Activated T-helper 1 cell treated with anti-CD3 and anti-CD28 coated beads, Interleukin-12 subunit alpha, Interleukin-12 subunit beta, Interleukin-2, Interleukin-4 antibody, amounts not matched to agents 30 ng/mL and 10 ng/mL and 1 ng/mL, durations not matched to agents 14 hours and 24 hours and 36 hours (primary cell): ENCODE measurements at regions of chr18 and their contacts with region 1.

Region 1: GRCh38 chr18:47756364-47757016 is 174.0 kb downstream of the SMAD2 start:
- DNase-seq: peak; percentile 31
- H3K4me3 Mint-ChIP-seq: no peak overlapping the region
- H3K27ac Mint-ChIP-seq: no peak overlapping the region
- H3K4me1 Mint-ChIP-seq: peaks cover 6% of the 10 kb centered on the region
- H3K27me3 Mint-ChIP-seq: peaks cover 10% of the 10 kb centered on the region

Region 2: DNA sequence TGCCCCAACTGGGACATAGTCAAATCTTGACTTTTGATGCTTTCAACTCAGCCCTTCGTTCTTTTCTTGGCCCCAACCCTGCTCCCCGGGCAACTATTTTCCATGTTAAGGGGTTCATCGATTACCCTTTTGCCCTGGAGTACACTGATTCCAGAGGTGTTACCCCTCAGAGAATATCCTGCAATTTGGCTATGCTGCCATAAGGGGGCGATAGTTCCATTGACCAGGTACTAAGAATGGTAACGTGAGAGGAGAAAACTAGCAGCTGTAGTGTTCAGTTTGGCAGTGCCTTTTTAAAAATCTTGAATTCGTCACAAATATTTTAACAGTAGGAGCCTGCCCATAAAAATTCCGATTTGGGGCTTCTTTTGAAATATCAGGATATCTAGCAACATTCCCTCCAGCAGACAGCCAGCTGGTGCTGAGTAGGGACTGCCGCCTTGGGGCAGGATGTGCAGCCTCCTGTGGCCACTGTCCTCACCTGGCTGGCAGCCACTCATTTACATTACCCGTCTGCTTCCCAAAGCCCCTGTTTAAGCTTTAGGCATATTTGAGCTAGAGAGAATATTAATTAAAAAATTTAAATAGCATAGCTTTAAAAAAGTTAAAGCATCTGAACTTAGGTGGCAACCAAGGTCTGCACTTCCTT is 358.7 kb before region 1 on chr18:
- intact Hi-C with region 1: loop called (anchors 10 kb)
- DNase-seq: no peak
- H3K4me3 Mint-ChIP-seq: no peak overlapping the region
- H3K27ac Mint-ChIP-seq: no peak overlapping the region
- H3K4me1 Mint-ChIP-seq: no peaks in the 10 kb centered on the region
- H3K27me3 Mint-ChIP-seq: no peaks in the 10 kb centered on the region

Region 3: GRCh38 chr18:48011926-48012465 is 255.5 kb after region 1 on chr18:
- intact Hi-C with region 1: no loop called
- DNase-seq: no peak
- H3K4me3 Mint-ChIP-seq: no peak overlapping the region
- H3K27ac Mint-ChIP-seq: no peak overlapping the region
- H3K4me1 Mint-ChIP-seq: no peaks in the 10 kb centered on the region
- H3K27me3 Mint-ChIP-seq: peaks cover 32% of the 10 kb centered on the region

Region 4: GRCh38 chr18:48022531-48023329 is 266.2 kb after region 1 on chr18:
- intact Hi-C with region 1: loop called (anchors 5 kb)
- DNase-seq: no peak
- H3K4me3 Mint-ChIP-seq: no peak overlapping the region
- H3K27ac Mint-ChIP-seq: no peak overlapping the region
- H3K4me1 Mint-ChIP-seq: peaks cover 12% of the 10 kb centered on the region
- H3K27me3 Mint-ChIP-seq: peaks cover 11% of the 10 kb centered on the region